Activated CD8-positive, alpha-beta T cell treated with anti-CD3 and anti-CD28 coated beads for 36 hours (primary cell): ENCODE measurements at regions of chrX and their contacts with region 1.

Region 1: GRCh38 chrX:13506574-13506973 is 62.8 kb upstream of the EGFL6 start:
- DNase-seq: peak; percentile 55
- ATAC-seq: no peak
- H3K4me3 Mint-ChIP-seq: no peak overlapping the region
- H3K27ac Mint-ChIP-seq: no peak overlapping the region
- H3K4me1 Mint-ChIP-seq: peaks cover 6% of the 10 kb centered on the region
- H3K27me3 Mint-ChIP-seq: peaks cover 1% of the 10 kb centered on the region
- CTCF ChIP-seq: peak; percentile 70

Region 2: DNA sequence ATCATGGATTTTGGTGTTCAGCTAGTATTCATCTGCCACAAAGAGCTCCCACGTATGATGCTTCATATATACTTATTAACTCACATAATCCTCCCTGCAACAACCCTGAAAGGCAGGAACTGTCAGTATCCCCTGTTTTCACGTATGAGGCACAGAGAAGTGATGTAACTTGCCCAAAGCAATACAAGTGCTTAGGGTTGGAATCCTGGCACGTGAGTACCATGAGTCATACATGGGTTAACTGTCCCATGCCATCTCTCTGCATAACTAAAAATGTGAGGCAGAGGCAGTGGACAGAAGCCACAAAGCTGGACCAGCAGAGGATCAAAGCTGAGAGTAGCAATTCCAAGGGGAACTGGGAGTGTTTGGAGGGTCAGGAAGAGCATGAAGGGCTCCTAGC is 27.2 kb after region 1 on chrX:
- CTCF ChIA-PET with region 1: interaction called, 11 read pairs
- POLR2A ChIA-PET with region 1: no interaction called
- intact Hi-C with region 1: no loop called
- DNase-seq: no peak
- ATAC-seq: no peak
- H3K4me3 Mint-ChIP-seq: no peak overlapping the region
- H3K27ac Mint-ChIP-seq: no peak overlapping the region
- H3K4me1 Mint-ChIP-seq: no peaks in the 10 kb centered on the region
- H3K27me3 Mint-ChIP-seq: no peaks in the 10 kb centered on the region
- CTCF ChIP-seq: no peak

Region 3: DNA sequence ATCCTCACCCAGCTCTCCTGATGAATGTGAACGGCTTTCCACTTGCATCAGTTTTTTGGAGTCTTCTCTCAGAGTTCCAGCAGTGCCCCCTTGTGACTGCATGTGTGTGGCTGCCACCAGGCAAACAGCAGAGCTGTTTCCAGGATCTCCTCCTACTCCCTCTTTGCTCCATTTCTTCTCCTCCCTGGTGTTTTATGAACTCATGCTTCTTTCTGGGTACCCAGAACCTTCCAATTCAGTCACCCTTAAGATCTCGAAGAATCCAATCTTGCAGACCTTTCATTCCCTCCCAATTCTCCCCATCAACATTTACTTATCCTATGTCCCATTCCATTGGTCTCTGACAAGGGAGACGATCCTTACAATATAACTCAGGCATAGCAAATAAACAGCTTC is 139.6 kb after region 1 on chrX:
- CTCF ChIA-PET with region 1: interaction called, 49 read pairs
- POLR2A ChIA-PET with region 1: no interaction called
- intact Hi-C with region 1: loop called (anchors 5 kb)
- DNase-seq: peak; percentile 71
- ATAC-seq: no peak
- H3K4me3 Mint-ChIP-seq: no peak overlapping the region
- H3K27ac Mint-ChIP-seq: peak overlapping the region; percentile 58
- H3K4me1 Mint-ChIP-seq: peaks cover 18% of the 10 kb centered on the region
- H3K27me3 Mint-ChIP-seq: no peaks in the 10 kb centered on the region
- CTCF ChIP-seq: peak; percentile 55

Region 4: GRCh38 chrX:13653022-13653693 is 146.6 kb after region 1 on chrX and contains the start of gene TCEANC:
- CTCF ChIA-PET with region 1: interaction called, 15 read pairs
- POLR2A ChIA-PET with region 1: no interaction called
- intact Hi-C with region 1: loop called (anchors 5 kb)
- DNase-seq: peak; percentile 96
- ATAC-seq: peak; percentile 95
- H3K4me3 Mint-ChIP-seq: peak within 1 kb of the TSS; percentile 80
- H3K27ac Mint-ChIP-seq: peak within 1 kb of the TSS; percentile 90
- H3K4me1 Mint-ChIP-seq: peaks cover 23% of the 10 kb centered on the region
- H3K27me3 Mint-ChIP-seq: no peaks in the 10 kb centered on the region
- CTCF ChIP-seq: no peak
- total RNA-seq, gene TCEANC: 1.3 to 1.4 TPM

Region 5: GRCh38 chrX:13750204-13750603 is 243.6 kb after region 1 on chrX:
- CTCF ChIA-PET with region 1: interaction called, 3 read pairs
- POLR2A ChIA-PET with region 1: no interaction called
- intact Hi-C with region 1: loop called (anchors 10 kb)
- DNase-seq: no peak
- ATAC-seq: no peak
- H3K4me3 Mint-ChIP-seq: no peak overlapping the region
- H3K27ac Mint-ChIP-seq: no peak overlapping the region
- H3K4me1 Mint-ChIP-seq: peaks cover 40% of the 10 kb centered on the region
- H3K27me3 Mint-ChIP-seq: no peaks in the 10 kb centered on the region
- CTCF ChIP-seq: peak; percentile 46

Region 6: GRCh38 chrX:14029425-14030173 is 523.0 kb after region 1 on chrX and contains the start of gene GEMIN8:
- CTCF ChIA-PET with region 1: interaction called, 16 read pairs
- POLR2A ChIA-PET with region 1: no interaction called
- intact Hi-C with region 1: loop called (anchors 5 kb)
- DNase-seq: peak; percentile 86
- ATAC-seq: peak; percentile 81
- H3K4me3 Mint-ChIP-seq: peak within 1 kb of the TSS; percentile 88
- H3K27ac Mint-ChIP-seq: peak within 1 kb of the TSS; percentile 97
- H3K4me1 Mint-ChIP-seq: peaks cover 27% of the 10 kb centered on the region
- H3K27me3 Mint-ChIP-seq: peaks cover 1% of the 10 kb centered on the region
- CTCF ChIP-seq: no peak
- total RNA-seq, gene GEMIN8: 14.7 to 15.5 TPM